WTC11 (cell line): ENCODE measurements at regions of chr4 and their contacts with region 1.

Region 1: DNA sequence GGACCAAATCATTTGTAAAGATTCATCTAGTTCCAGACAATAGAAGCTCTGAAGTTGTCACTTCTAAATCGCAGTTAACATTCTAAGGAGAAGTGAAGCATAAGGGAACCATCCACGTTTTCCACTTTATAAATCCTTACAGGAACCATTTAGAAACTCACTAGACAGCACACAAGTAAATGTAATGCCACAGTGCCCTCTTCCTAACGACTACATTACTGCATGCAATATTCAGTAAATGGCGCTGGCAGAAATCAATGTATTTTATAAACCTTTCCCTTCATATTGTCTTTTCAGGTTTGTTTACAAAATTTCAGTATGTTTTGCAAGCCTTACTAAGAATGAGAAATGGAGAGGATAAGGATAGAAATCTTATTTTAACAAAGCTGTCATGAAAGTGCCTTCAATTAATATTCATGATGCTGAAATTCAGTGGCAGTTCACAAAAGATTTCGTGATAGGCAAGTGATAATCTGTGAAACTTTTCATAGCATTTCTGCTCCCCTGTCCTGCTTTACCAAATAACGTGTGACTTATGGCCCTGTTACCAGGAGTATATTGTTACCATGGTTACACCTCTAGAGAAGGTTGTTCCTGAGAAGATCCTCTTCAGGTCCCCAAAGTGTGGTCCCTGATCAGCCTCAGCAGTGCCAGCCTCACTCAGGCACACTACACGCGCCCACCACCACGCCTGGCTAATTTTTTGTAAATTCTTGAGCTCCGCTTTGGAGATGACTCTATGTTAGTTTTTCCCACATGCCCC is 54.2 kb downstream of the TMA16 start:
- DNase-seq: no peak
- ATAC-seq: peak; percentile 56
- H3K4me3 Mint-ChIP-seq: no peak overlapping the region
- H3K27ac Mint-ChIP-seq: no peak overlapping the region
- H3K4me1 Mint-ChIP-seq: peaks cover 2% of the 10 kb centered on the region; the same call in 1 of the 2 replicates
- H3K27me3 Mint-ChIP-seq: no peaks in the 10 kb centered on the region
- CTCF ChIP-seq: peak; percentile 28; the same call in 1 of the 2 replicates

Region 2: GRCh38 chr4:163332500-163333406 is 215.9 kb before region 1 on chr4 and contains the start of gene NPY1R:
- CTCF ChIA-PET with region 1: interaction called, 10 read pairs
- POLR2A ChIA-PET with region 1: no interaction called
- DNase-seq: peak; percentile 78
- ATAC-seq: peak; percentile 78
- H3K4me3 Mint-ChIP-seq: peak within 1 kb of the TSS; percentile 81
- H3K27ac Mint-ChIP-seq: peak within 1 kb of the TSS; percentile 82
- H3K4me1 Mint-ChIP-seq: peaks cover 25% of the 10 kb centered on the region
- H3K27me3 Mint-ChIP-seq: peaks cover 17% of the 10 kb centered on the region
- CTCF ChIP-seq: peak; percentile 31; the same call in 1 of the 2 replicates
- total RNA-seq, gene NPY1R: 18.0 to 21.5 TPM (median 21.3 TPM) in 3 replicates

Region 3: DNA sequence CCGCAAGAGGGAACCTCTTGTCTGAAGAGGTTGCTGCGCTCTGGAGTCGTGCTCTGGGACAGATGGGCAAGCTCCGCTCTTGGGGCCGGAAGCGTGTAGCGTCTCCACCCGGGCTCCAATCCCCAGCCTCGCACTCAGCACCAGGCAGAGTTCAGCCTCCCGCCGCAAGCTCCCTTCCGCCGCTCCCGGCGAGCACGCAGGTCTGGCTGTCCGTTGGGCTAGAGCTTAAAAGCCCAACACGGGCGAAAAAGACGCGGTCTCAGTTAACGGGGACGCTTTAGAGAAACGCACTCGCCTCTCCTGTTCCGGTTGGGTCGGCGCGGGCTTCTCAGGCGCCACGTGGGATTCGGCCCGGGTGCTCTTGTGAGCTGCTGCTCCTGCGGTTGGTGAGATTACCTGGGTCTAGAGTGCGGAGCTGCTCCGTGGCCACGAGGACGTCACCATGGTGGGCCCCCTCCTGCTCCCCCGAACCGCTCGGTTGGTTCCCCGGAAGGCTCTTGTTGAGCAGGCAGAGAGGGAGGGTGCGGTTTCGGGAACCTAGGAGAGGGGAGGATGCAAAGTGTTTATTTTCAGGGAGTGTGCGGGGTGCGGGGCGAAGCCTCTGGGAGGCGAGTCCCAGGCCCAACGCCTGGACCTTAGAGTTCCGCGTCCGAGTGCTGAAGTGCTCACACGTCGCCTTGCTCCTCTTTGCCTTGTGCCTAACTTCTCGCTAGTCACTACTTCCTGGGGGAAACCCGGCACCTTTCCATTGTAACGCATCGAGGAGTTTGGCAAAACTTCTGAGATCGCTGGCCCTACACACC is 54.1 kb before region 1 on chr4 and contains the start of gene TMA16:
- CTCF ChIA-PET with region 1: interaction called, 15 read pairs
- POLR2A ChIA-PET with region 1: no interaction called
- DNase-seq: peak; percentile 89
- ATAC-seq: peak; percentile 91
- H3K4me3 Mint-ChIP-seq: peak within 1 kb of the TSS; percentile 91
- H3K27ac Mint-ChIP-seq: peak within 1 kb of the TSS; percentile 100
- H3K4me1 Mint-ChIP-seq: peaks cover 14% of the 10 kb centered on the region
- H3K27me3 Mint-ChIP-seq: no peaks in the 10 kb centered on the region; the same call in 1 of the 2 replicates
- CTCF ChIP-seq: no peak
- total RNA-seq, gene TMA16: 63.7 to 64.9 TPM (median 64.8 TPM) in 3 replicates

Region 4: GRCh38 chr4:163651761-163652160 is 103.1 kb after region 1 on chr4:
- CTCF ChIA-PET with region 1: interaction called, 10 read pairs
- POLR2A ChIA-PET with region 1: no interaction called
- DNase-seq: no peak
- ATAC-seq: no peak
- H3K4me3 Mint-ChIP-seq: no peak overlapping the region
- H3K27ac Mint-ChIP-seq: no peak overlapping the region
- H3K4me1 Mint-ChIP-seq: peaks cover 5% of the 10 kb centered on the region
- H3K27me3 Mint-ChIP-seq: no peaks in the 10 kb centered on the region
- CTCF ChIP-seq: no peak

Region 5: GRCh38 chr4:163681208-163681821 is 132.7 kb after region 1 on chr4:
- CTCF ChIA-PET with region 1: interaction called, 30 read pairs
- POLR2A ChIA-PET with region 1: no interaction called
- DNase-seq: no peak
- ATAC-seq: peak; percentile 82
- H3K4me3 Mint-ChIP-seq: no peak overlapping the region
- H3K27ac Mint-ChIP-seq: no peak overlapping the region
- H3K4me1 Mint-ChIP-seq: peaks cover 3% of the 10 kb centered on the region; the same call in 1 of the 2 replicates
- H3K27me3 Mint-ChIP-seq: no peaks in the 10 kb centered on the region
- CTCF ChIP-seq: peak; percentile 74

Region 6: GRCh38 chr4:164027805-164028204 is 479.1 kb after region 1 on chr4:
- CTCF ChIA-PET with region 1: no interaction called
- POLR2A ChIA-PET with region 1: no interaction called
- DNase-seq: no peak
- ATAC-seq: no peak
- H3K4me3 Mint-ChIP-seq: no peak overlapping the region
- H3K27ac Mint-ChIP-seq: no peak overlapping the region
- H3K4me1 Mint-ChIP-seq: peaks cover 9% of the 10 kb centered on the region
- H3K27me3 Mint-ChIP-seq: no peaks in the 10 kb centered on the region; the same call in 1 of the 2 replicates
- CTCF ChIP-seq: no peak